Activated T-helper 2 cell treated with anti-CD3 and anti-CD28 coated beads, Interferon-gamma antibody, Interleukin-2, Interleukin-4, amounts not matched to agents 10 μg/mL and 5 μg/mL and 100 μg/mL, durations not matched to agents 14 hours and 24 hours and 36 hours (primary cell): ENCODE measurements at regions of chr6 and their contacts with region 1.

Region 1: GRCh38 chr6:159720708-159721107 is 6.6 kb upstream of the WTAP start:
- DNase-seq: no peak
- H3K4me3 Mint-ChIP-seq: no peak overlapping the region
- H3K27ac Mint-ChIP-seq: no peak overlapping the region
- H3K4me1 Mint-ChIP-seq: peaks cover 8% of the 10 kb centered on the region
- H3K27me3 Mint-ChIP-seq: no peaks in the 10 kb centered on the region

Region 2: DNA sequence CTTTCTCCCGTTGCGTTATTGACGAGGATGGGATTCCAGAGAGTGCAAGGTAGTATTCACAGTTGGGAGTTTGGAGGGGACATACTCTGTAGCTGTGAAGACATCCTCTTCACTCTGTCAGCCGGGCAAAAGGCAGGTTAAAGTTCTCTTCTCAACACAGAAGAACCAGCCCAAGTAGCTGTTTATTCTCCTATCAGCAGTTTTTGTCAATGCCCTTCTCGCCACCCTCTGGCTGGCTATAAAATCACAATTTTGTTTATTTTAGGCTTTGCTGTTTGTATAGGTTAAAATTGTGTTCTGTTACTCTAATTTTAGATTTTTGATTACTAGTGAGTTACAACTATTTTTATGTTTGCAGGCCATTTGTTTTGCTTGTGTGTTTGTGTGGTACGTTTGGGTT is 132.2 kb after region 1 on chr6:
- intact Hi-C with region 1: loop called (anchors 5 kb)
- DNase-seq: no peak
- H3K4me3 Mint-ChIP-seq: no peak overlapping the region
- H3K27ac Mint-ChIP-seq: no peak overlapping the region
- H3K4me1 Mint-ChIP-seq: peaks cover 2% of the 10 kb centered on the region
- H3K27me3 Mint-ChIP-seq: peaks cover 27% of the 10 kb centered on the region